Common myeloid progenitor, CD34-positive (primary cell): ENCODE measurements at regions of chr2 and their contacts with region 1.

Region 1: GRCh38 chr2:165953655-165954606 is at the start of gene TTC21B:
- DNase-seq: peak; percentile 97 to 98 (median 98)
- H3K4me3 ChIP-seq: peak within 1 kb of the TSS; percentile 53 to 96 (median 82)
- H3K27ac ChIP-seq: peak within 1 kb of the TSS; percentile 64 to 86
- H3K4me1 ChIP-seq: peaks cover 7 to 26% (median 11%) of the 10 kb centered on the region in 4 experiments
- H3K27me3 ChIP-seq: no peaks in the 10 kb centered on the region

Region 2: GRCh38 chr2:165927353-165927752 is 26.6 kb before region 1 on chr2:
- CTCF ChIA-PET with region 1: interaction called, 13 read pairs
- POLR2A ChIA-PET with region 1: no interaction called
- DNase-seq: no peak
- H3K4me3 ChIP-seq: no peak overlapping the region
- H3K27ac ChIP-seq: no peak overlapping the region
- H3K4me1 ChIP-seq: peaks cover 0 to 15% (median 5%) of the 10 kb centered on the region in 4 experiments
- H3K27me3 ChIP-seq: no peaks in the 10 kb centered on the region

Region 3: DNA sequence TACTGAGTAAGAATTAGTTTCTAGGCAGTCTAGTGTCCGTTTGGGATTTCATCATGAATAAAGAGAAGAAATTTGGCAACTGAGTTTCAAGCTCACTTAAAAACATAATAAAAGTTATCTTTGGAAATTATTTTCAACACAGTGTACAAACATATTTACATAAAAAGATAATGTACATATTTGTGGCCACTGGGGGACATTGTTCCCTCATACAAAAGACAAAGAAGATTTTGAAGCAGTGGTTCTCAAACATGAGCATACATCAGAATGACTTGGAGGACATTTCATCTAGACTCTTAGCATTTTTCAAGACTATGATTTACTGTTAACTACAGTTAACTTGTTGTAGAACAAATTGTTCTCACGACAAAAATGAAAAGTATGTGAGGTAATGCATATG is 15.3 kb after region 1 on chr2:
- CTCF ChIA-PET with region 1: no interaction called
- POLR2A ChIA-PET with region 1: no interaction called
- DNase-seq: no peak
- H3K4me3 ChIP-seq: no peak overlapping the region
- H3K27ac ChIP-seq: no peak overlapping the region
- H3K4me1 ChIP-seq: no peaks in the 10 kb centered on the region
- H3K27me3 ChIP-seq: no peaks in the 10 kb centered on the region

Region 4: GRCh38 chr2:166127217-166128155 is 173.6 kb after region 1 on chr2 and contains the start of gene SCN1A:
- CTCF ChIA-PET with region 1: interaction called, 15 read pairs
- POLR2A ChIA-PET with region 1: no interaction called
- DNase-seq: peak; percentile 39 to 65 (median 62)
- H3K4me3 ChIP-seq: no peak within 1 kb of the TSS
- H3K27ac ChIP-seq: no peak within 1 kb of the TSS
- H3K4me1 ChIP-seq: no peaks in the 10 kb centered on the region
- H3K27me3 ChIP-seq: no peaks in the 10 kb centered on the region